Right cardiac atrium (tissue), 5 donors: ENCODE measurements at regions of chr7 and their contacts with region 1.

Region 1: DNA sequence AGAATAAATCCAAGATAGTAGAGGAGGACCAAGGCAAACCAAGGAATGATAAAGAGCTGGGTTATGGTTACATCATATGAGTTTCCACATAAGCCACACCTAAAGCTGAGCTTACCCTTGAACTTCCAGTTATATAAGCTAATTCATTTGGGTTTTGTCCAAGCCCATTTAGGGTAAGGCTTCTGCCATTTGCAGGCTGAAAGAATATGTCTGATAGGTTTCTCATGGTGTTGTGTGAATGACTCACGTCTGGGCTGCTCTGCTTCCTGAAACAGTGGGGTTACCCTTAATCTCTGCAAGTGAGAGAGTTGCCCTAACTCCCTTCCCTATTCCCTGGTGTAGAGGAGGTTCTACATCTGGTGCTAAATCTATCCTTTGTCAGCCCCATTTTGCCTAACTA is 60.8 kb downstream of the PTTG1IP2 start:
- DNase-seq: no peak
- ATAC-seq: no peak
- H3K4me3 ChIP-seq: no peak overlapping the region
- H3K27ac ChIP-seq: no peak overlapping the region
- H3K4me1 ChIP-seq: no peaks in the 10 kb centered on the region
- H3K27me3 ChIP-seq: no peaks in the 10 kb centered on the region

Region 2: GRCh38 chr7:90788052-90788451 is 257.8 kb after region 1 on chr7:
- intact Hi-C with region 1: loop called in 1 of 4 experiments (anchors 5 kb)
- DNase-seq: peak in 1 of 3 donors; percentile 49
- ATAC-seq: peak in 1 of 2 donors; percentile 74
- H3K4me3 ChIP-seq: no peak overlapping the region
- H3K27ac ChIP-seq: no peak overlapping the region
- H3K4me1 ChIP-seq: no peaks in the 10 kb centered on the region
- H3K27me3 ChIP-seq: no peaks in the 10 kb centered on the region